ENCODE measurements at regions of chr6 and their contacts with region 1.

Region 1: DNA sequence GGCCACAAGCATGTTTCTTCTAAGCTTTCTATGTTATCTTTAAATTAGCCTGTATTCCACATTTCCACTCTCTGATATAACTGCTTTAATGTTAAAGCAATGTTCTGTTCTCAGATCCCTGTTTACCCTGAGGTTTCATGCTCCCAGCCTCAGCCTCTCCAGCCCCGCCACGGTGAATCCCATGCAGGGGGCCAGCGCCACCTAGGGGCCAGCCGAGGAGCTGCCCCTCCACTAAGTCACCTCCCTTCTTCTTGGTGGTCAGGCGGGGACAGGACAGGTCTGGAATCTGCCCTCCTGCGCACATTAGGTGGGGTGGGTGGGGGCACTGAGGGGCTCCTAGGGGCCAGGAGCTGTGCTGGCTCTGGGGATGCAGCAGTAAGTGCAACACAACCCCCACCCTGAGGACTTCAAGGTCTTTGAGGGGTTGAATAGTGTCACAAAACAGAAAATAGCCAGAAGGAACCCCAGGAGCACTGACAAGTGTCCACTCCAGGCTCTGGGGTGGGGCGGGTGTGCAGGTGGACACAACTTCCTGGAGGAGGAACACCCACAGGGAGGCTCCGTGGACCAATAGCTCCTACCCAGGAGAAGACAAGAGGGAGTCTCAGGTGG is 61.6 kb downstream of the RAB44 start:
- DNase-seq: peak; percentile 60 to 86
- H3K4me3 ChIP-seq: no peak overlapping the region
- H3K27ac ChIP-seq: no peak overlapping the region
- H3K4me1 ChIP-seq: peaks cover 21% of the 10 kb centered on the region
- H3K27me3 ChIP-seq: no peaks in the 10 kb centered on the region
- CTCF ChIP-seq: peak; percentile 96

Region 2: GRCh38 chr6:36015666-36016065 is 743.6 kb before region 1 on chr6:
- CTCF ChIA-PET with region 1: no interaction called
- POLR2A ChIA-PET with region 1: no interaction called
- intact Hi-C with region 1: no loop called
- DNase-seq: no peak
- H3K4me3 ChIP-seq: no peak overlapping the region
- H3K27ac ChIP-seq: no peak overlapping the region
- H3K4me1 ChIP-seq: no peaks in the 10 kb centered on the region
- H3K27me3 ChIP-seq: no peaks in the 10 kb centered on the region
- CTCF ChIP-seq: no peak

Region 3: GRCh38 chr6:36423101-36423824 is 336.0 kb before region 1 on chr6:
- CTCF ChIA-PET with region 1: interaction called, 3 read pairs
- POLR2A ChIA-PET with region 1: no interaction called
- intact Hi-C with region 1: loop called (anchors 5 kb)
- DNase-seq: peak; percentile 94 to 98
- H3K4me3 ChIP-seq: peak overlapping the region; percentile 75
- H3K27ac ChIP-seq: peak overlapping the region; percentile 81
- H3K4me1 ChIP-seq: peaks cover 45% of the 10 kb centered on the region
- H3K27me3 ChIP-seq: no peaks in the 10 kb centered on the region
- CTCF ChIP-seq: peak; percentile 65

Region 4: GRCh38 chr6:36615018-36615761 is 144.1 kb before region 1 on chr6:
- CTCF ChIA-PET with region 1: interaction called, 9 read pairs
- POLR2A ChIA-PET with region 1: no interaction called
- intact Hi-C with region 1: loop called (anchors 1 kb)
- DNase-seq: peak; percentile 43 to 63
- H3K4me3 ChIP-seq: no peak overlapping the region
- H3K27ac ChIP-seq: no peak overlapping the region
- H3K4me1 ChIP-seq: peaks cover 24% of the 10 kb centered on the region
- H3K27me3 ChIP-seq: no peaks in the 10 kb centered on the region
- CTCF ChIP-seq: peak; percentile 83

Region 5: DNA sequence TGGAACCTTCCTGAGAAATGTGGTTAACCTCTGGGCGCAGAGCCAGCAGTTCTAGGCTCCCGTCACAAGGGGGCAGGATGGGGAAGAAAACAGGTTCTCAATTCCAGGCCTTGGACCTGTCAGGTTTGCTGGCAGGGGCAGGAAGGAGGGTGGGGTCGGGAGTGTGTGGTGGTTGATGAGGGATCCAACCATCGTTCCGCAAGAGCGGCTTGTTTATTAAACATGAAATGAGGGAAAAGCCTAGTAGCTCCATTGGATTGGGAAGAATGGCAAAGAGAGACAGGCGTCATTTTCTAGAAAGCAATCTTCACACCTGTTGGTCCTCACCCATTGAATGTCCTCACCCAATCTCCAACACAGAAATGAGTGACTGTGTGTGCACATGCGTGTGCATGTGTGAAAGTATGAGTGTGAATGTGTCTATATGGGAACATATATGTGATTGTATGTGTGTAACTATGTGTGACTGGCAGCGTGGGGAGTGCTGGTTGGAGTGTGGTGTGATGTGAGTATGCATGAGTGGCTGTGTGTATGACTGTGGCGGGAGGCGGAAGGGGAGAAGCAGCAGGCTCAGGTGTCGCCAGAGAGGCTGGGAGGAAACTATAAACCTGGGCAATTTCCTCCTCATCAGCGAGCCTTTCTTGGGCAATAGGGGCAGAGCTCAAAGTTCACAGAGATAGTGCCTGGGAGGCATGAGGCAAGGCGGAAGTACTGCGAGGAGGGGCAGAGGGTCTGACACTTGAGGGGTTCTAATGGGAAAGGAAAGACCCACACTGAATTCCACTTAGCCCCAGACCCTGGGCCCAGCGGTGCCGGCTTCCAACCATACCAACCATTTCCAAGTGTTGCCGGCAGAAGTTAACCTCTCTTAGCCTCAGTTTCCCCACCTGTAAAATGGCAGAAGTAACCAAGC is 135.5 kb before region 1 on chr6:
- CTCF ChIA-PET with region 1: interaction called, 21 read pairs
- POLR2A ChIA-PET with region 1: no interaction called
- intact Hi-C with region 1: no loop called
- DNase-seq: peak; percentile 49 to 76
- H3K4me3 ChIP-seq: no peak overlapping the region
- H3K27ac ChIP-seq: no peak overlapping the region
- H3K4me1 ChIP-seq: no peaks in the 10 kb centered on the region
- H3K27me3 ChIP-seq: no peaks in the 10 kb centered on the region
- CTCF ChIP-seq: peak; percentile 96

Region 6: GRCh38 chr6:36650848-36651478 is 108.3 kb before region 1 on chr6:
- CTCF ChIA-PET with region 1: no interaction called
- POLR2A ChIA-PET with region 1: no interaction called
- intact Hi-C with region 1: no loop called
- DNase-seq: no peak
- H3K4me3 ChIP-seq: no peak overlapping the region
- H3K27ac ChIP-seq: no peak overlapping the region
- H3K4me1 ChIP-seq: peaks cover 5% of the 10 kb centered on the region; the same call in 1 of the 2 replicates
- H3K27me3 ChIP-seq: no peaks in the 10 kb centered on the region
- CTCF ChIP-seq: no peak

Region 7: GRCh38 chr6:36724514-36725390 is 34.5 kb before region 1 on chr6:
- CTCF ChIA-PET with region 1: no interaction called
- POLR2A ChIA-PET with region 1: no interaction called
- intact Hi-C with region 1: loop called (anchors 2 kb)
- DNase-seq: peak; percentile 49 to 67
- H3K4me3 ChIP-seq: no peak overlapping the region
- H3K27ac ChIP-seq: no peak overlapping the region
- H3K4me1 ChIP-seq: no peaks in the 10 kb centered on the region
- H3K27me3 ChIP-seq: no peaks in the 10 kb centered on the region
- CTCF ChIP-seq: peak; percentile 79

Region 8: DNA sequence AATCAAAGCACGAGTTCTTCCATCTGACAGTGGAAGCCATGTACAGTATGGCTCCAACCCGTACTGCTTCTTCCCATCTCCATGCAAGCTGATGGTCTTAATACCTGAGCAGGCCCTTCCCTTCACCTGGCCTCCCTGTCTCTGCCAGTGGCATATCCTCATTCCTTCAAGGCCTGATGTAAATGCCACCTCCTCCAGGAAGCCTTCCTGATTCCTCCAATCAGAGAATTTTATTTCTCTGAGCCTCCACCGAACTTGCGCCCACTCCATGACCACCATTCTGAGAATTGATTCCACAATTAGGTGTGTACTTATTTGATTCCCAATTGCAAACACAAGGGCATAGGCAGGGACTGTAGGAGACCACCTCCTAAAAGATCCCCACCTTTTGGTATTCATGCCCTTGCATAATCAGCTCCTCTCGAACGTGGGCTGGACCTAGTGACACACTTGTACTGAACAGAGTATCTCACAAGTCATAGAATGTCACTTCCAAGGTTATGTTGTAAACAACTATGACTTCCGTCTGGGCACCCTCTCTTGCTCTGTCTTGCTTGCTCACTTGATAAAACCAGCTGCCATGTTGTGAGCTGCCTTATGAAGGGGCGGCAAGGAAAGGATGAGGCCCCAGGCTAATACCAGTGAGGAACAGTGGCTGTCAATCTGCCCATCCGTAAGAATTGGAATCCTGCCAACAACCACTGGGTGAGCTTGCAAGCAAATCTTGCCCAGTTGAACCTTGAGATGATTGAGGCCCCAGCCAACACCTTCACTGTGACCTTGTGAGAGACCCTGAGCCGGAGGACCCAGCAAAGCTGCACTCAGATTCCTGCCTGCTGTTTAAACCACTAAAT is 41.2 kb after region 1 on chr6:
- CTCF ChIA-PET with region 1: no interaction called
- POLR2A ChIA-PET with region 1: no interaction called
- intact Hi-C with region 1: no loop called
- DNase-seq: no peak
- H3K4me3 ChIP-seq: no peak overlapping the region
- H3K27ac ChIP-seq: no peak overlapping the region
- H3K4me1 ChIP-seq: no peaks in the 10 kb centered on the region
- H3K27me3 ChIP-seq: no peaks in the 10 kb centered on the region
- CTCF ChIP-seq: no peak